ENCODE measurements at regions of chr7 and their contacts with region 1.

Region 1: GRCh38 chr7:154794110-154794780 is 208.7 kb downstream of the PAXIP1 start:
- DNase-seq: no peak
- H3K4me3 ChIP-seq: no peak overlapping the region
- H3K27ac ChIP-seq: no peak overlapping the region
- H3K4me1 ChIP-seq: peaks cover 0 to 6% of the 10 kb centered on the region in 2 experiments; a peak in 1 of 4 replicates
- H3K27me3 ChIP-seq: no peaks in the 10 kb centered on the region
- CTCF ChIP-seq: no peak
- EP300 ChIP-seq: no peak
- RAD21 ChIP-seq: no peak

Region 2: GRCh38 chr7:154777023-154777422 is 17.2 kb before region 1 on chr7:
- CTCF ChIA-PET with region 1: interaction called, 20 read pairs
- POLR2A ChIA-PET with region 1: no interaction called
- DNase-seq: peak; percentile 58
- H3K4me3 ChIP-seq: no peak overlapping the region
- H3K27ac ChIP-seq: no peak overlapping the region
- H3K4me1 ChIP-seq: peaks cover 0 to 17% of the 10 kb centered on the region in 2 experiments; a peak in 2 of 4 replicates
- H3K27me3 ChIP-seq: no peaks in the 10 kb centered on the region
- CTCF ChIP-seq: no peak
- EP300 ChIP-seq: no peak
- RAD21 ChIP-seq: peak; percentile 15; the same call in 1 of the 2 replicates